ENCODE measurements at regions of chr19 and their contacts with region 1.

Region 1: DNA sequence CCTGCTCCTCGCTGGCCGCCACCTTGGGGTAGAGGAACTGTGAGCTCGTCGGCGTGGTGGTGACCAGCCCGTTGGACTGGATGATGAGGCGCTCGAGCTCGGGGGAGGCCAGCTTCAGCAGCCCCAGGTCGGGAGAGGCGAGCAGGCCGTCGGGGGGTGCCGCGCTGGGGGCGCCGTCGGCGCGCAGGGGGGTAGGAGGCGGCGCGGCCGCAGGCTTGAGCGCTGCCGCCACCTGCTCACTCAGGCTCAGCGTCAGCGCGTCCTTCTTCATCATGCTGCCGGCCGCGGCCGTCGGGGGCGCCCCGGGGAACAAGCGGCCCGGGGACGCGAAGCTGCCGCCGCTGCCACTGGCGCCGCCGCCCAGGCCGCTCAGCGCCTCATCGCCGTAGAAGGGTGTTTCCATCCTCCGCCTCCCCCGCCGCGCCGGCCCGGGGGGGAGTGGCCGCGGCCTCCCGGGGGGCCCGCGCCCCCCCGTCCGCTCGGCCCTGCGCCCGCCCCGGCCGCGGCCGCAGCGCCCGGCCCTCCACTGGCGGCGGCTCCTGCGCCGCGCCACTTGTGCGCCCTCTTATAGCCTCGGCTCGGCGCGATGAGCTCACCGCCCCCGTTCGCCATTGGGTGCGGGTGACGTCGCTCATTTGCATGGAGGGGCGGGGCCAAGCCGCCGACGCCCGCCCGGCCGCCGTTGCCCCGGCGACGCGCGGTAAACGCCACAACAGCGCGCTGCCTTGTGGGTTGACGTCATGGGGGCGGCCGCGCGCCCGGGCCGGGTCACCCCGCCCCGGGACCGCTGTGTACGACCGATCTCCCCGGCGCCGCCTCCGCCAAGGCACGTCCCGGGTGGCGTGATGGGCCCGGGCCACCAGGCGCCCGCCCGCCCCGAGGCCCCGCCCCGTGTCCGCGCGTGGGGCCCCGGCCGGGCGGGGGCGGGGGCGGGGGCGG is at the start of gene JUND:
- DNase-seq: peak; percentile 97 to 99 (median 99)
- H3K4me3 ChIP-seq: peak within 1 kb of the TSS; percentile 79 to 85
- H3K4me3 Mint-ChIP-seq: peak within 1 kb of the TSS; percentile 88 to 99 (median 96)
- H3K27ac ChIP-seq: peak within 1 kb of the TSS; percentile 98
- H3K27ac Mint-ChIP-seq: peak within 1 kb of the TSS; percentile 97 to 100 (median 98)
- H3K4me1 ChIP-seq: peaks cover 50% of the 10 kb centered on the region
- H3K4me1 Mint-ChIP-seq: peaks cover 30 to 60% (median 46%) of the 10 kb centered on the region in 4 donors
- H3K27me3 ChIP-seq: no peaks in the 10 kb centered on the region
- H3K27me3 Mint-ChIP-seq: peaks cover 0 to 6% of the 10 kb centered on the region in 2 donors
- total RNA-seq, gene JUND: 163 TPM

Region 2: DNA sequence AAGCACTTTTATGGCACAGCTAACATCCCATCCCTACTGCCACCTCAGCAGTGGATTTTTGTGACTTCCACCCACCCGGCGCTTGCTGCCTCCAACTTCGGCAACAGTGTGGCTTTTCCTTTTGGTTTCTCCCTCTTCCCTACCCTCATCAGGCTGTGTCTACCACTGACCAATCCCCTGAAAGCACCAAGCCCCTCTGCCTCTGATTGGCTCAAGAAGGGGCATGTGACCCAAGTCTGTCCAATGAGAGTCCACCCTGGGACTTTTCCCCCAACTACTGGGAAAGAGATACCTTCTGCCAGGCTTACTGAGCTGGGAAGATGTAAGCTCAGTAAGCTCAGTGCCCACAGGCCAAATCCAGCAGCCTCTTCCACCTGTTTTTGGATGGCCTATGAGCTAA is 1627.2 kb before region 1 on chr19:
- CTCF ChIA-PET with region 1: no interaction called
- POLR2A ChIA-PET with region 1: no interaction called
- intact Hi-C with region 1: no loop called
- DNase-seq: no peak
- H3K4me3 ChIP-seq: no peak overlapping the region
- H3K4me3 Mint-ChIP-seq: no peak overlapping the region
- H3K27ac ChIP-seq: no peak overlapping the region
- H3K27ac Mint-ChIP-seq: no peak overlapping the region
- H3K4me1 ChIP-seq: peaks cover 23% of the 10 kb centered on the region
- H3K4me1 Mint-ChIP-seq: peaks cover 23 to 54% (median 26%) of the 10 kb centered on the region in 4 donors
- H3K27me3 ChIP-seq: no peaks in the 10 kb centered on the region
- H3K27me3 Mint-ChIP-seq: no peaks in the 10 kb centered on the region

Region 3: GRCh38 chr19:18007044-18007916 is 274.1 kb before region 1 on chr19:
- CTCF ChIA-PET with region 1: no interaction called
- POLR2A ChIA-PET with region 1: interaction called, 11 read pairs
- intact Hi-C with region 1: no loop called
- DNase-seq: peak; percentile 75 to 85 (median 79)
- H3K4me3 ChIP-seq: peak overlapping the region; percentile 18 to 68
- H3K4me3 Mint-ChIP-seq: peak overlapping the region; percentile 86 to 95 (median 90)
- H3K27ac ChIP-seq: peak overlapping the region; percentile 95
- H3K27ac Mint-ChIP-seq: peak overlapping the region; percentile 95 to 100 (median 97)
- H3K4me1 ChIP-seq: peaks cover 56% of the 10 kb centered on the region
- H3K4me1 Mint-ChIP-seq: peaks cover 10 to 59% (median 28%) of the 10 kb centered on the region in 4 donors
- H3K27me3 ChIP-seq: no peaks in the 10 kb centered on the region
- H3K27me3 Mint-ChIP-seq: no peaks in the 10 kb centered on the region

Region 4: DNA sequence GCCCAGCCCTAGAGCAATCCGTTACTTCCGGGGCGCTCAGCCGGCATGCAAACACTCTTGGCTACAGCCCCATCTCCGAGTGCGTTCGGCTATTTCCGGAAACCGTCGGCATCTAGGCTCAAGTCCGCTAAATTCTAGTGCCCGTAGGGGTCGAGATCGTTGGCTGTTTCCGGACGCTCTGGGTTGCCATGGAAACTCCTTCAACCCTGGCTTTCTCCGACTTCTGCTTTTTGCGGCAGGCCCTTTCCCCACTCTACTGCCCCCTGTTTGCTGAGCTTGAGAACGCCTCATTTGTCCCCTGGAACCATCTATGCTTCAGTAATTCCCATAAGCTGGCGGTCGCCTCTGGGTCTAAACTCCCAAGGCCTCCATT is 128.9 kb before region 1 on chr19:
- CTCF ChIA-PET with region 1: interaction called, 5 read pairs
- POLR2A ChIA-PET with region 1: interaction called, 24 read pairs
- intact Hi-C with region 1: no loop called
- DNase-seq: peak; percentile 96 to 99 (median 96)
- H3K4me3 ChIP-seq: peak overlapping the region; percentile 74 to 79
- H3K4me3 Mint-ChIP-seq: peak overlapping the region; percentile 84 to 95 (median 91)
- H3K27ac ChIP-seq: peak overlapping the region; percentile 74
- H3K27ac Mint-ChIP-seq: peak overlapping the region; percentile 88 to 99 (median 97)
- H3K4me1 ChIP-seq: peaks cover 28% of the 10 kb centered on the region
- H3K4me1 Mint-ChIP-seq: peaks cover 14 to 38% (median 21%) of the 10 kb centered on the region in 4 donors
- H3K27me3 ChIP-seq: no peaks in the 10 kb centered on the region
- H3K27me3 Mint-ChIP-seq: no peaks in the 10 kb centered on the region

Region 5: DNA sequence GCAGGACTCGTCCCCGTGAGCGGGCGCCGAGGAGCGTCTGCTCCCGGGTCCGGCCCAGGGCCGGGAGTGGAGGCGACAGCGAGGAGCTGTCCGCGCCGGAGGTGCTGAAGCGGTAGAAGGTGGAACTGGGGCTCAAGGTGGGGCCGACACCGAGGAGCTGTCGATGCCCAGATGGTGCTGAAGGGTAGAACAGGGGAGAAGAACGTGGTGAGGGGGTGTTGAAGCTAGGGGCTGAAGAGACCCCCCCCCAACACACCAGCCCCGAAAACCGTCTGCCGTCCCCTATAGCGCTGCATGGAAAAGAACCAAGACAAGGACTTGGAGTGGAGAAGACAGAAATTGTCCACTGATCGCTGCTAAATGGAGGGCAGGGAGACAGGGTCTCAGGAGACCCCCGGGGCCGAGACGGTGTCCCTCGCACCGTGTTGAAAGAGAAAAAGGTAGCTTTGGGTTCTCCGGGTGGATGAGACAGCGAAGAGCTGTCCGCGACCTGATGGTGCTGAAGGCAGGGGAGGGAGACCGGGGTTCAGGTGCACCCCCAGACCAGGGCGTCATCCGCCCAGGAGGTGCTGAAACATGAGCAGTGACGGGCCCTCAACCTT is 48.0 kb before region 1 on chr19:
- CTCF ChIA-PET with region 1: no interaction called
- POLR2A ChIA-PET with region 1: no interaction called
- intact Hi-C with region 1: no loop called
- DNase-seq: peak; percentile 43 to 66 (median 54)
- H3K4me3 ChIP-seq: no peak overlapping the region
- H3K4me3 Mint-ChIP-seq: no peak overlapping the region
- H3K27ac ChIP-seq: no peak overlapping the region
- H3K27ac Mint-ChIP-seq: no peak overlapping the region
- H3K4me1 ChIP-seq: no peaks in the 10 kb centered on the region
- H3K4me1 Mint-ChIP-seq: peaks cover 0 to 4% (median under 1%) of the 10 kb centered on the region in 4 donors
- H3K27me3 ChIP-seq: peaks cover 25% of the 10 kb centered on the region
- H3K27me3 Mint-ChIP-seq: peaks cover 47% of the 10 kb centered on the region in 2 donors

Region 6: DNA sequence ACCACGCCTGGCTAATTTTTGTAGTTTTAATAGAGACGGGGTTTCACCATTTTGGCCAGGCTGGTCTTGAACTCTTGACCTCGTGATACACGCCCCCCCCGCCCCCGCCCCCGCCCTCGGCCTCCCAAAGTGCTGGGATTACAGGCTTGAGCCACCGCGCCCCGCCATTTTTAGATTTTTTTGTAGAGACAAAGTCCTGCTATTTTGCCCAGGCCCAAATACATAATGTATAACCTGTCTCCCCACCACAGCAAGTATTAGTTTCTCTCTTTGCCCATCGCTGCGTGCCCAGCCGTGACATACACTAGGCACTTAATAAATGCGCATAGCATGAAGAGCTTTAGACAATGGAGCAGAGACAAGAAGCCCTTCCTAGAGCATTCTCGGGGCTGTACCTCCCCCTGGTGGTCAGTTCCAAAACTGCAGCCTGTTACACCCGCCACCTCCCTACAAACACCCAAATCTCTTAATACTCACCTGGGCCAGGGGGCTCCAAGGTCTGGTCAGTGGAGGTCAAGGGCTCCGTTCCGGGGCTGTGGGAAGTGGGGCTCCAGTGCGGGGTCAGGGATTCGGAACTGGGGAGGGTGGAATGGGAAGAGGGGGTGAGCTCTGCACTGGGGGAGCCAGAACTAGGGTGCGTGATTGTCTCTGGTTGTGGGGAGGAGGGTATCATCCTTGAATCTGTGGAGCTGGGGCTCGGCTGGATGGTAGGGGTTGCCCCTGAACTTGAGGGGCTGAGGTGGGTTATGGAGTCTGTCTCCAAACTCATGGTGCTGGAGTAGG is 29.6 kb before region 1 on chr19:
- CTCF ChIA-PET with region 1: interaction called, 17 read pairs
- POLR2A ChIA-PET with region 1: interaction called, 3 read pairs
- intact Hi-C with region 1: no loop called
- DNase-seq: peak; percentile 74 to 79 (median 76)
- H3K4me3 ChIP-seq: no peak overlapping the region
- H3K4me3 Mint-ChIP-seq: no peak overlapping the region
- H3K27ac ChIP-seq: no peak overlapping the region
- H3K27ac Mint-ChIP-seq: peak overlapping the region in 2 of 7 donors; percentile 4 to 66
- H3K4me1 ChIP-seq: no peaks in the 10 kb centered on the region
- H3K4me1 Mint-ChIP-seq: peaks cover 1 to 7% (median 5%) of the 10 kb centered on the region in 4 donors
- H3K27me3 ChIP-seq: no peaks in the 10 kb centered on the region
- H3K27me3 Mint-ChIP-seq: peaks cover 4 to 9% of the 10 kb centered on the region in 2 donors

Region 7: DNA sequence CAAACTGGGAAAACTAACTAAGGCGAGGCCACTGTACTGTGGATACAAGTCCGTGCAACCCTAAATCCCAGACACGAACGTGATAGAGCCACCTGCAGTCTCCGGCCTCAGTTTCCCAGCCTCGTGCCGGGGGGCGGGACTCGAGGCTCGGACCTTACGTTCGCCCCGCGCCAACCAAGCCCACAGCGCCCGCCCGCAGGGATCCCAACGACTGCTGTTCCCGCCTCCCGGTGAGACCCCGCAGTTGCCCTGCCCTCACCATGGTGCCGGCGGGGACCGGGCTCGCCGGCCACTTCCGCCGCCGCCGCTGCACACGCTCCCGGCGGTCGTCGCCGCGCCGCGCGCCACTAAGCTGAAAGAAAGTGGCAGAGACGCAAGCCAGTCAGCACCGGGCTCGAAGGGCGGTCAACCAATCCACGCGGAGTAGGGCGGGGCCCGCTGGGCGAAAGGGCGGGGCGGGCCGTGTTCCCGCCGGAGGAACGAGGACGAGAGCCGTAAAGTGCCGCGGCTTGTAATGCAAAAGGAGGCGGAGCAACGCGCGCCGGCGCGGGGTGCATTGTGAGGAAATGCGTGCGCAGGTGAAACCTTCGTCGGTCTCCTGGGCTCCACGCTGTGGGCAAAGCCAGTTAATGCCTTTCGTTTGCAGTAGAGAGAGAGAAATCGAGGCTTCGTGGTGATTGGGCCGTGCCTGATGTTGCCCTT is 41.6 kb after region 1 on chr19 and contains the start of gene LSM4:
- CTCF ChIA-PET with region 1: interaction called, 542 read pairs
- POLR2A ChIA-PET with region 1: interaction called, 1,691 read pairs
- intact Hi-C with region 1: loop called (anchors 1 kb)
- DNase-seq: peak; percentile 99 to 100 (median 99)
- H3K4me3 ChIP-seq: peak within 1 kb of the TSS; percentile 61 to 81
- H3K4me3 Mint-ChIP-seq: peak within 1 kb of the TSS; percentile 75 to 88 (median 86)
- H3K27ac ChIP-seq: peak within 1 kb of the TSS; percentile 68
- H3K27ac Mint-ChIP-seq: peak within 1 kb of the TSS; percentile 86 to 98 (median 97)
- H3K4me1 ChIP-seq: peaks cover 59% of the 10 kb centered on the region
- H3K4me1 Mint-ChIP-seq: peaks cover 32 to 59% (median 45%) of the 10 kb centered on the region in 4 donors
- H3K27me3 ChIP-seq: no peaks in the 10 kb centered on the region
- H3K27me3 Mint-ChIP-seq: no peaks in the 10 kb centered on the region
- total RNA-seq, gene LSM4: 64.2 to 65.0 TPM

Region 8: DNA sequence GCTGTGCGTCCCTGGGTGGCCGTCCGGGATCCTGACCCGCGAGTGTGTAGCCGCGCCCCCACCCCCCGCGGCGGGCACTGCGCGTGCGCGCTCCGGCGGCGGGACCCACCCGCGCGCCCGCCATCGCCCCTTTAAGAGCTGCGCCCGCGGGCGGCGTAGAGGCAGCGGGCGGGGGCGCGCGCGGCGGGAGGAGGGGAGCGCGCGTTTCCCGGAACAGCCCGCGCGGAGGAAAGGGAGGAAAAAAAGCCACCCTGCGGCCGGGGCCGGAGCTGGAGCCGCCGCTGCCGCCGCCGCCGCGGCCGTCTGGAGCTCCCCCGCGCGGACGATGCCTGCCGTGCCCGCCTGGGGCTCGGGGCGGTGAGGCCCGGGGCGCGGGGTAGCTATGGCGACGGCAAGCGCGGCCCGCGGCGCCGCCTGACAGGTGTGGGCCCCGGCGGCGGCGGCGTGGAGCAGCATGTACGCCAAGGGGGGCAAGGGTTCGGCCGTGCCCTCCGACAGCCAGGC is 137.9 kb after region 1 on chr19 and contains the start of gene SSBP4:
- CTCF ChIA-PET with region 1: interaction called, 38 read pairs
- POLR2A ChIA-PET with region 1: interaction called, 125 read pairs
- intact Hi-C with region 1: no loop called
- DNase-seq: peak; percentile 76 to 83 (median 81)
- H3K4me3 ChIP-seq: peak within 1 kb of the TSS; percentile 29 to 64
- H3K4me3 Mint-ChIP-seq: peak within 1 kb of the TSS; percentile 92 to 96 (median 94)
- H3K27ac ChIP-seq: peak within 1 kb of the TSS; percentile 70
- H3K27ac Mint-ChIP-seq: peak within 1 kb of the TSS; percentile 96 to 98 (median 97)
- H3K4me1 ChIP-seq: peaks cover 87% of the 10 kb centered on the region
- H3K4me1 Mint-ChIP-seq: peaks cover 62 to 90% (median 76%) of the 10 kb centered on the region in 4 donors
- H3K27me3 ChIP-seq: no peaks in the 10 kb centered on the region
- H3K27me3 Mint-ChIP-seq: peaks cover 2 to 5% of the 10 kb centered on the region in 2 donors
- total RNA-seq, gene SSBP4: 71.3 to 73.4 TPM

Region 9: DNA sequence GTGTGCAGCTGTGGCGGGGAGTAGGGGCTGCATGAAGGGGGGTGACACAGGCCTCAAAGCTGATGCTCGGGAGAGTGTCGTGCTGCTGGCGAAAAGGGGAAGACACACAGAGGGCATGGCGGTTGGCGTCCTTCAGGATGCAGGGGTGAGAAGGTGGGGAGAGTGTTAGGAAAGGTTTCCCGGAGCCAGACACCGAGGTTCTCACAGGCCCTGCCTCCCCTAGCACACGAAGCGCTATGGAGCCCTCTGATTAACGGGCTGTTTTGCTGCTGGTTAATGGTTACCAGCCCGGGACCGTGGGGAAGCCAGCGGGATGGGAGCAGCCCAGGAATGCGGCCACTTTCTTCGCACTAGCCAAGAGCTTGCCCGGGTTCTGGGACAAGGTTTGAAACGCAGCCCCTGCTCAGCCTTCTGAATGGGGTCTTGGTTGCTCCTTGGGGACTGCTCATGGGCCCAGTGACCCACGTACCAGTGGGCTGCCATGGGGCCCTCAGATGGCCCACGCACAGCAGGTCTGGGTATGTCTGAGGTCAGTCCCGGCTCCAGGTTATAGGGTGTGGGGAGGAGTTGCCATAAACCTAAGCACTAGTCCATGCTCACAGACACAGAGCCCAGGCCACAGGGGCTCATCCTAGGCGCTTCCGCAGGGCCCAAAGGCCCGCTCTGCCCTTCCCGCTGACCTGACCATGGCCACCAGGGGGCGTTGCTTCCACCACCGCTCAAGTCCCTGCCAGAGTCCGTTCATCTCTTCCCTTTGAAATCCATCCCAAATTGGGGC is 187.9 kb after region 1 on chr19:
- CTCF ChIA-PET with region 1: no interaction called
- POLR2A ChIA-PET with region 1: no interaction called
- intact Hi-C with region 1: no loop called
- DNase-seq: peak; percentile 45 to 59 (median 56)
- H3K4me3 ChIP-seq: no peak overlapping the region
- H3K4me3 Mint-ChIP-seq: peak overlapping the region in 1 of 8 donors; percentile 25
- H3K27ac ChIP-seq: no peak overlapping the region
- H3K27ac Mint-ChIP-seq: peak overlapping the region in 6 of 7 donors; percentile 42 to 84 (median 80)
- H3K4me1 ChIP-seq: peaks cover 47% of the 10 kb centered on the region
- H3K4me1 Mint-ChIP-seq: peaks cover 15 to 52% (median 32%) of the 10 kb centered on the region in 4 donors
- H3K27me3 ChIP-seq: no peaks in the 10 kb centered on the region
- H3K27me3 Mint-ChIP-seq: no peaks in the 10 kb centered on the region

Measured in CD4-positive, alpha-beta memory T cell (primary cell).